Left ventricle myocardium superior (tissue), 1 donor: ENCODE measurements at regions of chr2 and their contacts with region 1.

Region 1: GRCh38 chr2:13000664-13001363 is 284.1 kb downstream of the TRIB2 start:
- DNase-seq: peak; percentile 33
- ATAC-seq: peak; percentile 85

Region 2: DNA sequence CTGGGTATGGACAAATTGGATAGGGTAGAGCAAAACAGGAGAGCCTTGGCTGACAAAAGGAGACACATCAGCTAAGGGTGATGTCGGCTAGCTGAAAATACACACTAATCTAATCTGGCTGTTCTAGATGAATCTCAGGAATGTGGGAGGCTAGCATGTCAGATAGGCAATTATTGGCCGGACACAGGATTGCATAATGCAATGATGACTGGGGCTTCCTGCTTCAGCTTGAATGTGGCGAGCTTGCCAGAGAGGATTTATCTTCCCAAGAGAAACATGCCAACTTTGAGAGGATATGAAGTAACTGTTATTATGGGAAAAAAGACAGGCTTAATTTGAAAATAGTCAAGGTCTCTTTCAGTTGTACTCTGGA is 181.7 kb before region 1 on chr2:
- intact Hi-C with region 1: loop called (anchors 5 kb)
- DNase-seq: peak; percentile 42
- ATAC-seq: peak; percentile 97